ENCODE measurements at regions of chr17 and their contacts with region 1.

Region 1: GRCh38 chr17:41769985-41770594 is 16.4 kb downstream of the JUP start:
- DNase-seq: no peak
- ATAC-seq: no peak
- H3K4me3 ChIP-seq: no peak overlapping the region
- H3K27ac ChIP-seq: no peak overlapping the region
- H3K4me1 ChIP-seq: peaks cover 25 to 40% (median 32%) of the 10 kb centered on the region in 9 donors
- H3K27me3 ChIP-seq: no peaks in the 10 kb centered on the region
- CTCF ChIP-seq: no peak

Region 2: GRCh38 chr17:41844971-41845370 is 74.9 kb after region 1 on chr17:
- intact Hi-C with region 1: loop called in 1 of 10 experiments (anchors 2 kb)
- DNase-seq: no peak
- ATAC-seq: no peak
- H3K4me3 ChIP-seq: no peak overlapping the region
- H3K27ac ChIP-seq: no peak overlapping the region
- H3K4me1 ChIP-seq: peaks cover 0 to 12% (median 0%) of the 10 kb centered on the region in 9 donors
- H3K27me3 ChIP-seq: no peaks in the 10 kb centered on the region
- CTCF ChIP-seq: no peak